Common myeloid progenitor, CD34-positive (primary cell): ENCODE measurements at regions of chr11 and their contacts with region 1.

Region 1: DNA sequence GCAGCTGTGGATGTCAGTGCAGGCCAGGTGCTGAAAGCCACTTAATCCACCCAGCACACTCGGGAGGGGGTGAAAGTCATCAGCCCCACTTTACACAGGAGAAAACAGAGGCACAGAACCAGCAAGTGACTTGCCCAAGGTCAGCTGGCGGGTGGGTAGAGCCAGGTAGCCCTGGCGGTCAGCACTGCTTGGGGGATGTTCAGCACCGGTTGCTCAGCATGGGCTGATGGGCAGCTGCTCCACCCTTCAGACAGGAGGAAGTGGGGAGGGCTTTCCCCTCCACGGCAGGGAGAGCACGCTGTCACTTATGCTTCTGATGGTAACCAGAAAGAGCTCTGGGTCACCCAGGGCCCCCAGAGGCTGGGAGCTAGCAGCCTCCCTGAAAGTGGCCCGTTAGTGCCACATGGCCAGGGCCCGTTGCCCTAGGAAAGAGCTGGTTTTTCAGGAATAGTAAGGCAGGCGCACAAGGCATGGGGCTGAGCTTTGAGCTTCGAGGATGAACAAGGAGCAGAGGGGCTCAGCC is 417.9 kb downstream of the CTTN start:
- DNase-seq: no peak
- H3K4me3 ChIP-seq: no peak overlapping the region
- H3K27ac ChIP-seq: no peak overlapping the region
- H3K4me1 ChIP-seq: no peaks in the 10 kb centered on the region
- H3K27me3 ChIP-seq: no peaks in the 10 kb centered on the region

Region 2: GRCh38 chr11:70694371-70694770 is 121.8 kb before region 1 on chr11:
- CTCF ChIA-PET with region 1: no interaction called
- POLR2A ChIA-PET with region 1: no interaction called
- DNase-seq: no peak
- H3K4me3 ChIP-seq: no peak overlapping the region
- H3K27ac ChIP-seq: no peak overlapping the region
- H3K4me1 ChIP-seq: no peaks in the 10 kb centered on the region
- H3K27me3 ChIP-seq: no peaks in the 10 kb centered on the region

Region 3: GRCh38 chr11:70804139-70804837 is 11.9 kb before region 1 on chr11:
- CTCF ChIA-PET with region 1: interaction called, 16 read pairs
- POLR2A ChIA-PET with region 1: no interaction called
- DNase-seq: peak; percentile 25 to 78 (median 57)
- H3K4me3 ChIP-seq: peak overlapping the region in 3 of 7 experiments; percentile 19 to 51 (median 20)
- H3K27ac ChIP-seq: no peak overlapping the region
- H3K4me1 ChIP-seq: peaks cover 0 to 20% (median 6%) of the 10 kb centered on the region in 4 experiments
- H3K27me3 ChIP-seq: no peaks in the 10 kb centered on the region

Region 4: DNA sequence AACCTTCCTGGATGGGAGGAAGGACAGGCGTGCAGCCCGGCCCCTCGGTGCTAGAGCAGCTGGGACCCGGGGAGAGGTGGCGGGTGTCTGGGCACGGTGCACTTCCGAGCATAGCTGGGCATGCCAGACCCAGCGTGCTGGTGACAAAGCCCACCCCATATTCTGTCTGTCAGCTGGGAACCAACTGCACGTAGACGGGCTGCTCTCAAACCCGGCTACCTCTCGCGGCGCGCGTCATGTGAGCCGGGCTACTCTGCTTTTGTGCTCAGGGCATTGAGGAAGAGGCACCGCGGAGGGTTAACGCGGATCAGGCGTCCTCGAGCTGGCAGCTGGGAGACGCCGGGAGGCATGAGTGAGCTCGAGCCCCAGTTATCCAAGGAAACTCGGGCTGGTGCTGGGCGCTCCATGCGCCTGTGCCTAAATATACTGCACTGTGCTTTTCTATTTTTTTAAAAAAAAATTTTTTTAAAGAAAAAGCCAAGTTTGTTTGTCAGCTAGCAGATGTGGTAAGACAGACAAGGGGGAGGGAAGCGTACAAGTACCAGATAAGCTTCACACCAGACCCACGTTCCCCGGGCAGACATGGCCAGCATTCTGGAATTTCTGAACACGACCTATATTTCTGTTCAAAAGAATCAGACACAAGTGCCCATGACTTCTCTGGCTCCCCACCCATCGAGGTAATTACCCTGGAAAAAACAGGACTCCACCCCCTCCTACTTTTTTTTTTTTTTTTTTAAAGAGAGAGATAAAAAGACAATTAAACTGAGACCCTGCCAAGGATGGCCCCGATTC is 10.5 kb after region 1 on chr11:
- CTCF ChIA-PET with region 1: interaction called, 23 read pairs
- POLR2A ChIA-PET with region 1: no interaction called
- DNase-seq: peak; percentile 31 to 77 (median 56)
- H3K4me3 ChIP-seq: peak overlapping the region in 4 of 7 experiments; percentile 34 to 73 (median 41)
- H3K27ac ChIP-seq: no peak overlapping the region
- H3K4me1 ChIP-seq: peaks cover 0 to 50% (median 12%) of the 10 kb centered on the region in 4 experiments
- H3K27me3 ChIP-seq: peaks cover 0 to 45% (median 10%) of the 10 kb centered on the region in 5 experiments